ENCODE measurements at regions of chr19 and their contacts with region 1.

Region 1: GRCh38 chr19:13150187-13150930 is at the starts of genes IER2 and STX10:
- DNase-seq: peak; percentile 96 to 97 (median 97)
- H3K4me3 ChIP-seq: peak within 1 kb of the TSS; percentile 87
- H3K27ac ChIP-seq: peak within 1 kb of the TSS; percentile 94 to 96
- H3K4me1 ChIP-seq: peaks cover 9% of the 10 kb centered on the region
- H3K27me3 ChIP-seq: no peaks in the 10 kb centered on the region
- CTCF ChIP-seq: peak; percentile 62 to 73 (median 72)
- EP300 ChIP-seq: peak; percentile 7
- POLR2A ChIP-seq: peak; percentile 93
- total RNA-seq, gene IER2: 55.3 to 301 (median 82.8) TPM
- total RNA-seq, gene STX10: 36.5 to 54.8 (median 43.0) TPM

Region 2: GRCh38 chr19:13099073-13099999 is 51.0 kb before region 1 on chr19:
- intact Hi-C with region 1: loop called in 1 of 4 experiments (anchors 5 kb)
- DNase-seq: peak in 4 of 5 donors; percentile 46 to 74 (median 54)
- H3K4me3 ChIP-seq: peak overlapping the region; percentile 39
- H3K27ac ChIP-seq: peak overlapping the region in 1 of 2 donors; percentile 59
- H3K4me1 ChIP-seq: peaks cover 9% of the 10 kb centered on the region
- H3K27me3 ChIP-seq: no peaks in the 10 kb centered on the region
- CTCF ChIP-seq: no peak
- EP300 ChIP-seq: no peak
- POLR2A ChIP-seq: no peak

Region 3: DNA sequence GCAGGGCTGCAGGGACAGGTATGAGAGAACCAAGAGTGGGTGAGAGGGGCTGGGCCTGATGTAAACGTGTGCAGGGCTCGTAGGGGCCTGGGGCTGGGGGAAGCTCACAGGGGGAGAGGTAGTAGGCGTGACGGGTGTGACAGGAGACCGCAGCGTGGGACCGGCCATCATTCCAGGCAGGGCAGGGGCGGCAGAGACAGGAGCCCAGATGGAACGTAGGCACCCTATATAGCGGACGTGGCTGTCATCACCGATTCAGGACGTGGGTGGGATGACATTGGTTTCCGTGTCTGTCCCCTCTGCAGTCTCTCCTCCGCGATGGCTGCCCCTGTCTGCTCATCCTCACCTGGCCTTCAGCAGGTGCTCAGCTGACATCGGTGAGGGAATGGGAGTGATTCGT is 48.3 kb after region 1 on chr19:
- intact Hi-C with region 1: loop called in 1 of 4 experiments (anchors 1 kb)
- DNase-seq: no peak
- H3K4me3 ChIP-seq: no peak overlapping the region
- H3K27ac ChIP-seq: no peak overlapping the region
- H3K4me1 ChIP-seq: no peaks in the 10 kb centered on the region
- H3K27me3 ChIP-seq: no peaks in the 10 kb centered on the region
- CTCF ChIP-seq: no peak
- EP300 ChIP-seq: no peak
- POLR2A ChIP-seq: no peak

Region 4: DNA sequence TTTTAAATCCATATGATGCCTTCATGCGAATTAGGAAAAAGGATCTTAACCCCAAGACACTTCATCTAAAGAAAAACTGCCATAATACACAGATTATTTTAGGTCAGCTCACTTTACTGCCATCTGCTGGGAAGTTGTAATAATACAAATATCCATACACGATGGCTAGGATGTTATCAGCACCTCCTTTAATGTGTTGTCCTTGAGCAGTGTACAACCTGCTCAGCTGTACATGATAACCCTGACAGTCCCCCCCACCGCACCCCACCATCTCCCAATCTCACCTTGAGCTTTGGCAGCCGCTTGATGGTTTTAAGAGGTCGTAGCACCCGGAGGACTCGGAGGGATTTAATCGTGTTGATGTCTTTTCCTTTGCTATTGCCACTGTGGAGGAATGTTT is 112.1 kb after region 1 on chr19:
- intact Hi-C with region 1: loop called in 1 of 4 experiments (anchors 10 kb)
- DNase-seq: no peak
- H3K4me3 ChIP-seq: no peak overlapping the region
- H3K27ac ChIP-seq: no peak overlapping the region
- H3K4me1 ChIP-seq: no peaks in the 10 kb centered on the region
- H3K27me3 ChIP-seq: no peaks in the 10 kb centered on the region
- CTCF ChIP-seq: peak; percentile 14 to 62 (median 40)
- EP300 ChIP-seq: no peak
- POLR2A ChIP-seq: no peak

Measured in ovary (tissue), 10 donors.